OCI-LY7 (cell line): ENCODE measurements at regions of chr3 and their contacts with region 1.

Region 1: DNA sequence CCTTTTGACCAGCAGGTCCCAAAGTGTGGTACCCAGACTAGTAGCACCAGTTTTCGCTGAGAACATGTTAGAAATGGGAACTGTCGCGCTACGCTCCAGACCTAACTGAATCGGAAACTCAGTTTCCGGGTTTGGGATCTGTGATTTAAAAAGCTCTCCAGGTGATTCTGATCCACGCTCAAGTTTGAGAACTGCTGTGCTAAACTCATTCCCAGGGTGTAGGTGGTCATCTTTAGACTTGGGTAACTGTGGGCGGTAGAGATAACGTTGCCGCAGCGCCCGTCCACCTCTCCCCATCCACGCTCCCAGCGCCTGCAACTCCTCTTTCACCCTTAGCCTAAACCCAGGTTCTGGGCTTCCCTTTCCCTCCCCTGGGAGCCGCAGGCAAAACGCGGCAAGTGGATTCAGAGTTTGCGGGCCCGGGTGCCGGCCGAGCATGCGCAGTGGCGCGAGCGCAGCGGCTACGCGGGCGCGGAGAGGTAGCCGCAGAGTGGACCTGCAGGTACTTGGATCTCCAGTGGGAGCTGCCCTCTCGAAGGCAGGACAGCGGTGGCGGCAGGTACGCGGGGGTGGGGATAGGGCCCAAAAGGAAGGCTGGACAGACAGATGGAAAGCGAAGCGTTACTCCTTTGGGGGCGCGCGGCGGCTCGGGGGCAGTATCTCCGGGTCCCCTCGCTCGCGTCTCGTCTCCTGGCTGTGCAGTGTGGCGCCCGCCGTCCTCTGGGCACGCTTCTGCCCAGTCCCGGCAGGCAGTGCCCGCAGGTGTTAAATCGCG is at the start of gene PLS1:
- DNase-seq: peak; percentile 89
- H3K4me3 ChIP-seq: peak within 1 kb of the TSS; percentile 83
- H3K27ac ChIP-seq: peak within 1 kb of the TSS; percentile 9
- H3K4me1 ChIP-seq: peaks cover 21% of the 10 kb centered on the region
- CTCF ChIP-seq: no peak
- total RNA-seq, gene PLS1: 4.0 and 5.6 TPM in 2 replicates

Region 2: GRCh38 chr3:142385078-142385477 is 211.1 kb before region 1 on chr3:
- CTCF ChIA-PET with region 1: no interaction called
- POLR2A ChIA-PET with region 1: no interaction called
- intact Hi-C with region 1: no loop called
- DNase-seq: no peak
- H3K4me3 ChIP-seq: no peak overlapping the region
- H3K27ac ChIP-seq: no peak overlapping the region
- H3K4me1 ChIP-seq: no peaks in the 10 kb centered on the region
- CTCF ChIP-seq: no peak

Region 3: GRCh38 chr3:142578327-142579223 is 17.6 kb before region 1 on chr3 and contains the start of gene ATR:
- CTCF ChIA-PET with region 1: no interaction called
- POLR2A ChIA-PET with region 1: interaction called, 24 read pairs
- intact Hi-C with region 1: loop called (anchors 1 kb)
- DNase-seq: peak; percentile 97
- H3K4me3 ChIP-seq: peak within 1 kb of the TSS; percentile 97
- H3K27ac ChIP-seq: peak within 1 kb of the TSS; percentile 71
- H3K4me1 ChIP-seq: peaks cover 38% of the 10 kb centered on the region
- CTCF ChIP-seq: no peak
- total RNA-seq, gene ATR: 26.8 and 27.1 TPM in 2 replicates

Region 4: DNA sequence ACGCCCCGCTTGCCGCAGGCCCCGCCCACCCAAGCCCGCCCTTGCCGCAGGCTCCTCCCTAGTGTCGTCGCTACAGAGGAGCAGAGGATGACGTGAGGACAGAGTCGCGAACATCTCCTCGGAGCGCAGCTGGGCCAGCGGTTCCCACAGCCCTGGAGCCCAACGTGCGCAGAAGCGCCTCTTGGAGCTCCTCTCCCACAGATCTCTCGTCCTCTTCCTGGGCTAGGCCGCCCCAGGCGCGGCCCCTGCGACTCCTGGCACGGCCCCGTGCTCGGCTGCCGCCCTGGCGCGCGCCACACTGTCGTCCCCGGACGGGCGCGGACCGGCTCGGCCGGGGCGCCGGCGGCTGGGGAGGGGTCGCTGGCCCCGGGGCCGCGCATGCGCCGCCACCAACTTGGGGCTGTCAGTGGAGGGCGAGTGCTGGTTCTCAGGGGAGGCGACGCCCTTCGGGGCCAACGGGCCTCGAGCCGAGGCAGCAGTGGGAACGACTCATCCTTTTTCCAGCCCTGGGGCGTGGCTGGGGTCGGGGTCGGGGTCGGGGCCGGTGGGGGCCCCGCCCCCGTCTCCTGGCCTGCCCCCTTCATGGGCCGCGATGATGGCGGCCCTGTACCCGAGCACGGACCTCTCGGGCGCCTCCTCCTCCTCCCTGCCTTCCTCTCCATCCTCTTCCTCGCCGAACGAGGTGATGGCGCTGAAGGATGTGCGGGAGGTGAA is 128.0 kb after region 1 on chr3 and contains the start of gene TRPC1:
- CTCF ChIA-PET with region 1: no interaction called
- POLR2A ChIA-PET with region 1: interaction called, 5 read pairs
- intact Hi-C with region 1: loop called (anchors 5 kb)
- DNase-seq: peak; percentile 81
- H3K4me3 ChIP-seq: peak within 1 kb of the TSS; percentile 74
- H3K27ac ChIP-seq: no peak within 1 kb of the TSS
- H3K4me1 ChIP-seq: peaks cover 3% of the 10 kb centered on the region
- CTCF ChIP-seq: no peak
- total RNA-seq, gene TRPC1: 0.60 and 2.3 TPM in 2 replicates